Mammary epithelial cell (primary cell): ENCODE measurements at regions of chr12 and their contacts with region 1.

Region 1: GRCh38 chr12:47095446-47096236 is 15.9 kb upstream of the AMIGO2 start:
- DNase-seq: peak; percentile 78
- H3K4me3 ChIP-seq: peak overlapping the region in 1 of 3 experiments; percentile 25
- H3K27ac ChIP-seq: peak overlapping the region; percentile 92
- H3K4me1 ChIP-seq: peaks cover 36% of the 10 kb centered on the region
- H3K27me3 ChIP-seq: no peaks in the 10 kb centered on the region
- CTCF ChIP-seq: no peak

Region 2: DNA sequence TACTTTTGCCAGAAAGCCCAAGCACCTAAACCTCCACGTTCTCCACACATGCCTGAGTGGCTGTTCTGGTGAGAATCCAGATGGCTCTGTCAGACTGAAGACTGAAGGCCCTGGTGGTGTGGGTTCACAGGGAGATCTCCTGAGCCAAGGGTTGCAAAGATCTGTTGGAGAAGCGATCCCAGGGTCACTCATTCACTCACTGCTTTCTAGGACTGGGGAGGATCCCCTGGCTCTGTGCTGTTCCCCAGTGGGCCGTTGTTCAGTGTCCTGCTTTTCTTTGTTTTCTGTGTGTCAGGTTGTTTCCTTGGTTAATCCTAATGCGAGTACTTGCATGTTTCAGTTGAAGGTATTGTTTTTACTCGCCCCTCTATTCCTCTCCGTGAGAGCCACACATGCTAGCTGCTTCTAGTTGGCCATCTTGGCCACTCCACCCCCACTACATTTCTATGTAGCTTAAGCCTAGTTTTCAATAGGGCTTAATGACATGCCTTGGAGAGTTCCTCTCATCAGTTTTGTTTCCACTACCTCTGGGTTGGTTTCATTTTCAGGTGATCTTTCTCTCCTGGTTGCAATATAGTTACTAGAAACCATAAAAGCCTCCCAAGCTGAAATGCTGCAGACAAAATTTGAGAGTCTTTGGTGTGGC is 578.6 kb before region 1 on chr12:
- CTCF ChIA-PET with region 1: no interaction called
- dilution Hi-C with region 1: no loop called
- in situ Hi-C with region 1: no loop called
- intact Hi-C with region 1: no loop called
- DNase-seq: no peak
- H3K4me3 ChIP-seq: no peak overlapping the region
- H3K27ac ChIP-seq: no peak overlapping the region
- H3K4me1 ChIP-seq: peaks cover 8% of the 10 kb centered on the region
- H3K27me3 ChIP-seq: no peaks in the 10 kb centered on the region
- CTCF ChIP-seq: no peak

Region 3: GRCh38 chr12:47178014-47178413 is 82.4 kb after region 1 on chr12:
- CTCF ChIA-PET with region 1: no interaction called
- dilution Hi-C with region 1: loop called (anchors 5 kb)
- in situ Hi-C with region 1: no loop called
- intact Hi-C with region 1: no loop called
- DNase-seq: no peak
- H3K4me3 ChIP-seq: no peak overlapping the region
- H3K27ac ChIP-seq: no peak overlapping the region
- H3K4me1 ChIP-seq: no peaks in the 10 kb centered on the region
- H3K27me3 ChIP-seq: no peaks in the 10 kb centered on the region
- CTCF ChIP-seq: no peak

Region 4: GRCh38 chr12:47408171-47408871 is 312.7 kb after region 1 on chr12:
- CTCF ChIA-PET with region 1: interaction called, 11 read pairs
- dilution Hi-C with region 1: no loop called
- in situ Hi-C with region 1: no loop called
- intact Hi-C with region 1: no loop called
- DNase-seq: peak; percentile 69
- H3K4me3 ChIP-seq: no peak overlapping the region
- H3K27ac ChIP-seq: no peak overlapping the region
- H3K4me1 ChIP-seq: peaks cover 2% of the 10 kb centered on the region
- H3K27me3 ChIP-seq: no peaks in the 10 kb centered on the region
- CTCF ChIP-seq: peak; percentile 54 to 56

Region 5: GRCh38 chr12:47517122-47517521 is 421.5 kb after region 1 on chr12:
- CTCF ChIA-PET with region 1: no interaction called
- dilution Hi-C with region 1: no loop called
- in situ Hi-C with region 1: no loop called
- intact Hi-C with region 1: no loop called
- DNase-seq: no peak
- H3K4me3 ChIP-seq: no peak overlapping the region
- H3K27ac ChIP-seq: no peak overlapping the region
- H3K4me1 ChIP-seq: no peaks in the 10 kb centered on the region
- H3K27me3 ChIP-seq: no peaks in the 10 kb centered on the region
- CTCF ChIP-seq: no peak